T-cell (primary cell): ENCODE measurements at regions of chr5 and their contacts with region 1.

Region 1: GRCh38 chr5:50435168-50435567 is 5.9 kb downstream of the EMB start:
- DNase-seq: peak in 1 of 35 experiments; percentile 31
- ATAC-seq: peak in 2 of 4 experiments; percentile 11 to 31
- H3K4me3 ChIP-seq: no peak overlapping the region
- H3K4me3 Mint-ChIP-seq: peak overlapping the region; percentile 30 to 69 (median 65)
- H3K27ac ChIP-seq: peak overlapping the region; percentile 6
- H3K27ac Mint-ChIP-seq: peak overlapping the region; percentile 75 to 79
- H3K4me1 ChIP-seq: peaks cover 27 to 39% of the 10 kb centered on the region in 2 experiments
- H3K4me1 Mint-ChIP-seq: peaks cover 90 to 98% (median 94%) of the 10 kb centered on the region in 3 donors
- H3K27me3 ChIP-seq: no peaks in the 10 kb centered on the region
- H3K27me3 Mint-ChIP-seq: no peaks in the 10 kb centered on the region

Region 2: GRCh38 chr5:50415912-50416311 is 19.3 kb before region 1 on chr5:
- CTCF ChIA-PET with region 1: interaction called in 1 of 2 experiments, 3 read pairs
- POLR2A ChIA-PET with region 1: interaction called, 4 to 10 read pairs
- DNase-seq: peak in 27 of 35 experiments; percentile 4 to 71 (median 25)
- ATAC-seq: peak; percentile 86 to 95 (median 90)
- H3K4me3 ChIP-seq: no peak overlapping the region
- H3K4me3 Mint-ChIP-seq: peak overlapping the region in 2 of 3 donors; percentile 35 to 38
- H3K27ac ChIP-seq: peak overlapping the region; percentile 56
- H3K27ac Mint-ChIP-seq: peak overlapping the region; percentile 90 to 92
- H3K4me1 ChIP-seq: peaks cover 19 to 35% of the 10 kb centered on the region in 2 experiments
- H3K4me1 Mint-ChIP-seq: peaks cover 87 to 90% (median 89%) of the 10 kb centered on the region in 3 donors
- H3K27me3 ChIP-seq: no peaks in the 10 kb centered on the region
- H3K27me3 Mint-ChIP-seq: no peaks in the 10 kb centered on the region

Region 3: GRCh38 chr5:50463047-50463446 is 27.9 kb after region 1 on chr5:
- CTCF ChIA-PET with region 1: no interaction called
- POLR2A ChIA-PET with region 1: no interaction called
- DNase-seq: no peak
- ATAC-seq: no peak
- H3K4me3 ChIP-seq: no peak overlapping the region
- H3K4me3 Mint-ChIP-seq: no peak overlapping the region
- H3K27ac ChIP-seq: no peak overlapping the region
- H3K27ac Mint-ChIP-seq: no peak overlapping the region
- H3K4me1 ChIP-seq: peaks cover 0 to 8% of the 10 kb centered on the region in 2 experiments
- H3K4me1 Mint-ChIP-seq: peaks cover 15 to 22% (median 17%) of the 10 kb centered on the region in 3 donors
- H3K27me3 ChIP-seq: no peaks in the 10 kb centered on the region
- H3K27me3 Mint-ChIP-seq: no peaks in the 10 kb centered on the region

Region 4: DNA sequence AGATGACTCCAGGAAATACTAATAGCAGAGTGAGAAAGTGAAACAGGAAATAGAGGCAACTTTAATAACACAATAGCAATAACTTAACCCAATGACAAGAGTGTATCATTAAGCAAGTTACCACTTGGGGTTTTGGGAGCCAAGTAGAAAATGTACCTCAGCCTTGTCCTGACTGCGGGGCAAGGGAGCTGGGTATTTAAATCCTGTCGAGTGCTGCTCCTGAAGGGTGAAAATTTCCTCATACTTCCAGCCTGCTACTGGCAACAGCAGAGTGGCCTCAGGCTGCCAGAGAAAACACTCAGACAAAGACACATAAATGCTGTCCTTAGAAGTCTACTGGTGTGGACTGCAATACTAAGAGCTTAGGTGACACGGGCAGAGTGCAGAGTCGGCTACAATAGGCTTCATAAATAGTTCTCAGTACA is 118.4 kb after region 1 on chr5:
- CTCF ChIA-PET with region 1: no interaction called
- POLR2A ChIA-PET with region 1: no interaction called
- DNase-seq: peak in 3 of 35 experiments; percentile 1 to 12 (median 3)
- ATAC-seq: peak in 1 of 4 experiments; percentile 29
- H3K4me3 ChIP-seq: no peak overlapping the region
- H3K4me3 Mint-ChIP-seq: peak overlapping the region; percentile 13 to 25 (median 15)
- H3K27ac ChIP-seq: no peak overlapping the region
- H3K27ac Mint-ChIP-seq: peak overlapping the region; percentile 62 to 85
- H3K4me1 ChIP-seq: peaks cover 3% of the 10 kb centered on the region in 2 experiments
- H3K4me1 Mint-ChIP-seq: peaks cover 24 to 36% (median 27%) of the 10 kb centered on the region in 3 donors
- H3K27me3 ChIP-seq: no peaks in the 10 kb centered on the region
- H3K27me3 Mint-ChIP-seq: no peaks in the 10 kb centered on the region